HCT116 (cell line): ENCODE measurements at regions of chr11 and their contacts with region 1.

Region 1: DNA sequence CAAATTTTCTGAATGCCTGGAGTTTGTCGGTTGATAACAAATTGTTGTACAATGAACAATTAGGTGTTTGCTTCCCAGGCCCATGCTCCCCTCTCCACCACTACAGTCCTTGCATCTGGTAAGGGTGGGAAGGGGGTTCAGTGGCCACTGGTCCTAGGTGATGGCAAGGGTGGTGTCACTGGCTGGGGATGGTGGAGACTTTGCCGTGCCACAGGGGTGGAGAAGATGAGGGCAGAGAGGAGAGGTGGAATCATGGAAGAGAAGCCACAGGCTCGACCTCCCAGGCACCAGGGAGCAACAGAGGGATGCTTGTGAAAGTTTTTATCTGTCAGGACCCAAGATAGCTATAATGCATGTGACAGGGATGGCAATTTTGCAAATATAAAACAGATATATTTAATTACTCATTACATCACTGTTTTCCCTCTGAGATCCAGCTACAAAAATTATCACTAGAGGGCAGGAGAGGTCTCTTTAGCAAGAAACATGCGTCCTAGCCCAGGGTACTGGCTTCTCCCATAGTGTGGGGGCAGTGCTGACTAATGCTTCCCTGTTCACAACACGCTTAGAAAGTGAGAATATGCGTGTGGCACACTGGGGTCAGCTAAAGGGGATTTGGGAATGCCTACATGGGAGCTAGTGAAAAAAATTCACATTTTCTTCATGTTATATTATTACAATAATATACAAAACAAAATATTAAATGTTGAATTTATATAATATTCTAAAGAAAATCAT is 49.0 kb upstream of the AMPD3 start:
- DNase-seq: peak; percentile 87
- ATAC-seq: peak; percentile 92
- H3K4me3 ChIP-seq: no peak overlapping the region
- H3K27ac ChIP-seq: peak overlapping the region; percentile 43; the same call in 1 of the 2 replicates
- H3K4me1 ChIP-seq: peaks cover 21 to 43% of the 10 kb centered on the region in 2 experiments
- H3K27me3 ChIP-seq: no peaks in the 10 kb centered on the region
- CTCF ChIP-seq: peak; percentile 78 to 98 (median 88)
- POLR2A ChIP-seq: no peak
- RAD21 ChIP-seq: peak; percentile 100

Region 2: DNA sequence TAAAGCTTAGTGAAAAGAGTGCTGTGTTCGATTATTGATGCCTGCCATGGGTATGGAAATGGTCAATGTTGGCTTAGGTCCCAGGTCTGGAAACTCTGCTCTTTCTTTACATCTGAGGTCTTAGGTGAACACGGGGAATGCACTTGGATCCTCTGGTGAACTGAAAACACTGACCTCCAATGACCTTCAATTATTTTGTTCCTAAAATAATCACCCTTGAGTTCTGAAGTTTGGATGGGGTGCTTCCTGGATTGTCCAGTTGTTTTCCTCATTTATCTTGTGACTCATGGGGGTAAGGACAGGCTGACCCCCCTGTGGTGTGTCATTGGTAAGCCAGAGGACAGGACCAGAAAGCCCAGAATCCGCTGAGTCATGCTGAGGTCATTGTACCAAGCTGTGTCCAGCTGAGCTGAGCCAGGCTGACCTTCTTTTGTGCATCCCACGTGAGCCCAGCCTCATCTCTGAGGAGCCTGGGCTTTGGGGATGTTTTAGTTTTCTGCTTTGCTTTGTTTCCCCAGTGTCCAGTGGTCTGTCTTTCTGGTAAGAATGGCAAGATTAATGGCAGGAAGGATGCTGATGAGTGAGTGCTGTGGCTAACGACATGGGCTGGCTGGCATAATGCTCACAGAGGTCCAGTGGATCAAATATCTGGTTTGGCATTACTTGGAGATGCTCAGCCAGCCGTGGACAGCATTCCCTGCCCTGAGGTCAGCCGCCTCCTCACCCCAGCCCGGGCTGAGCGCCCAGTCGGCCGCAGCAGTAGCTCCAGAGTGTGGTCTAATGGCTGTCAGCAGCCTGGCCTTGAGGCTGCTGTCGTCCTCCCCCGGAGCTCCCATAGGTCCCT is 84.6 kb after region 1 on chr11:
- CTCF ChIA-PET with region 1: interaction called, 4 read pairs
- POLR2A ChIA-PET with region 1: no interaction called
- RAD21 ChIA-PET with region 1: interaction called in 1 of 2 experiments, 4 read pairs
- intact Hi-C with region 1: loop called (anchors 1 kb)
- DNase-seq: peak; percentile 94
- ATAC-seq: peak; percentile 69
- H3K4me3 ChIP-seq: peak overlapping the region in 1 of 2 experiments; percentile 14; a peak in 2 of 4 replicates
- H3K27ac ChIP-seq: peak overlapping the region; percentile 79
- H3K4me1 ChIP-seq: peaks cover 48 to 66% of the 10 kb centered on the region in 2 experiments
- H3K27me3 ChIP-seq: no peaks in the 10 kb centered on the region
- CTCF ChIP-seq: no peak
- POLR2A ChIP-seq: no peak
- RAD21 ChIP-seq: 0 out of 2 replicates have a peak, but pooled peaks have one; percentile 30

Region 3: DNA sequence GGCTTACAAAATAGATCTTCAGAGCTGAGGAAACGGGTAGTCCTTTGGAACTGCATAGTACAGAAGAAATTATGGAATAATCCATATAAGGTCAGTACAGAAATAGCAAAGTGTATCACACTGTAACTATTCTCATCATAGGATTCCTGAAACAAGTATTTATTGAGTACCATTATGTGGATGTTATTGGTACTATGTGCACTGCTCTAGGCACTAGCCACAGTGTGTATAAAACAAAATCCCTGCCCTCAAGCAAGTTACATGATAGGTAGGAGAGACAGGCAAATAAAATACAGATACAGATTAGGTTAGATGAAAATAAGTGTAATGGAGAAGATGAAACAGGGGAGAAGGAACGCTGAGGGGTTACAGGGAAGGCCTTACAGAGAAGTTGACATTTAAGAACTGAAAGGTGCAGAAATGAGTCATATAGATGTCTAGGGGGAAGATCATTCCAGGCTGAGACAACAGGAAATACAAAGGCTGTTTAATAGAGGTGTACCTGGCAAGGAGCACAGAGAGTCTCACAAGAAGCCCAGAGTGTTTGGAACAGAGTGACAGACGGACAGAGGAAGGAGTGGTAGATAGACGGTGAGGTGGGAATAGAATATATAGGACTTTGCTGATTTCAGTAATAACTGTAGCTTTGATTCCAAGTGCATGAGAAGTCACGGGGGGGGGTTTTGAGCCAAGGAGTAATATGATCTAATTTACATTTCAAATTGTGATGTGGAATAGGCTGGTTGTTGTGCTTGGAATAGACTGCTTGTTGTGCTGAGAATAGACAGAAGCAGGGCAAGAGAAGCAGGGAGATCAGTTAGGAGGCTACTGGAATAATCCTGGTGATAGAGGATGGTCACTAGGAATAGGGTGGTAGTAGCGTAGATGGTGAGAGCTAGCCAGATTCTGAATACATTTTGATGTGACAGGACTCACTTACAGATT is 121.2 kb after region 1 on chr11:
- CTCF ChIA-PET with region 1: no interaction called
- POLR2A ChIA-PET with region 1: no interaction called
- RAD21 ChIA-PET with region 1: no interaction called
- intact Hi-C with region 1: loop called (anchors 1 kb)
- DNase-seq: peak; percentile 88
- ATAC-seq: peak; percentile 88
- H3K4me3 ChIP-seq: peak overlapping the region; percentile 0 to 39; a peak in 3 of 4 replicates
- H3K27ac ChIP-seq: peak overlapping the region; percentile 90
- H3K4me1 ChIP-seq: peaks cover 54 to 87% of the 10 kb centered on the region in 2 experiments
- H3K27me3 ChIP-seq: no peaks in the 10 kb centered on the region
- CTCF ChIP-seq: no peak
- POLR2A ChIP-seq: no peak
- RAD21 ChIP-seq: 0 out of 2 replicates have a peak, but pooled peaks have one; percentile 8

Region 4: DNA sequence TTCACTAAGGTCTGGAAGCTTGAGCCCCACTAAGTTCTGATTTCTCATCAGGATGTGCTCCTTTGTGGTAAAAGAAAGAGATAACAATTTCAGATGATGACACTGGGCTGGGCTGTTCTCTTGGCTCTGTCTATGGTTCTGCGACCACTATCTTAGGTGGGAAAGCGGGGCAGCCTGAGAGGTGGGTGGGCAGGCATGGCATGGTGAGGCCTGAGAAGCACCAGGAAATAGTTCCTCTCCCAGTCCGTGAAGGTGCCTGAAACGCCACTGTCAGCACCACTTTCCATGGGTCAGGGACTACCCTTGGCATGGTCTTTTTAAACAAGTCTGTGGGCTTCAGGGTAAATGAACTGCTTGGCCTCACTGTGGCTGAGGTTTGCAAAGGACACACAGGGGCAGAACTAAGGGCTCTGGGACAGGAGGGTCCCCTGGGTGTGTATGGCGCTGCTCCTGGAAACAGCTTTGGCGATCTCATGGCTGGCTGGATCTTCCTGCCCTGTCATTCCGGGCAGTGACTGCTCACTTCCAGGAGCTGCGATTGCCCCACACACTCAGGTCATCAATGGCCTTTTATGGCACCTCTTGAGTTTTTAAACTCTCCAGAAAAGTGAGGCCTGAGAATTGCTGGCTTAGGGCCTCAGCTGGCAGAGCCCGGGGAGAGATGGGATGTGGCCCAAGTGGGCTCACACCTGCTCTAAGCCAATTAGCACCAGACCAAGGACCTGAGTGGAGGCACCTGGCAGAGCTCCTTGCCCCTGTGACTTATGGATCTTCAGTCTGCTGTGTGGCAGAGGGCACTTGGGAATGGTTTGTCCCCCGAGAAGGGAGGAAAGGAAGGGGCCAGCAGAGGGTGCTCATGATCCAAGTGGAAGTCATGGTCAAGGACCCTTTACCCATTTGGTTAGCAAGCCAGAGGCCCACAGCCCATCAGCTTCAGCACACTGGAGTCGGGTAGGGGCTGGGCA is 218.1 kb after region 1 on chr11:
- CTCF ChIA-PET with region 1: interaction called, 12 read pairs
- POLR2A ChIA-PET with region 1: no interaction called
- RAD21 ChIA-PET with region 1: interaction called, 3 to 4 read pairs
- intact Hi-C with region 1: loop called (anchors 2 kb)
- DNase-seq: peak; percentile 43
- ATAC-seq: peak; percentile 78
- H3K4me3 ChIP-seq: no peak overlapping the region
- H3K27ac ChIP-seq: peak overlapping the region; percentile 65
- H3K4me1 ChIP-seq: peaks cover 31 to 74% of the 10 kb centered on the region in 2 experiments
- H3K27me3 ChIP-seq: no peaks in the 10 kb centered on the region
- CTCF ChIP-seq: peak; percentile 73 to 87 (median 74); a peak in 5 of 6 replicates
- POLR2A ChIP-seq: no peak
- RAD21 ChIP-seq: peak; percentile 93